Motor neuron (in vitro differentiated cells): ENCODE measurements at regions of chr1 and their contacts with region 1.

Region 1: GRCh38 chr1:110645821-110646735 is 28.7 kb downstream of the KCNA3 start:
- ATAC-seq: peak in 5 of 8 experiments; percentile 35 to 79 (median 55)
- H3K4me3 ChIP-seq: no peak overlapping the region
- H3K27ac ChIP-seq: no peak overlapping the region
- H3K4me1 ChIP-seq: peaks cover 10% of the 10 kb centered on the region in 2 donors

Region 2: DNA sequence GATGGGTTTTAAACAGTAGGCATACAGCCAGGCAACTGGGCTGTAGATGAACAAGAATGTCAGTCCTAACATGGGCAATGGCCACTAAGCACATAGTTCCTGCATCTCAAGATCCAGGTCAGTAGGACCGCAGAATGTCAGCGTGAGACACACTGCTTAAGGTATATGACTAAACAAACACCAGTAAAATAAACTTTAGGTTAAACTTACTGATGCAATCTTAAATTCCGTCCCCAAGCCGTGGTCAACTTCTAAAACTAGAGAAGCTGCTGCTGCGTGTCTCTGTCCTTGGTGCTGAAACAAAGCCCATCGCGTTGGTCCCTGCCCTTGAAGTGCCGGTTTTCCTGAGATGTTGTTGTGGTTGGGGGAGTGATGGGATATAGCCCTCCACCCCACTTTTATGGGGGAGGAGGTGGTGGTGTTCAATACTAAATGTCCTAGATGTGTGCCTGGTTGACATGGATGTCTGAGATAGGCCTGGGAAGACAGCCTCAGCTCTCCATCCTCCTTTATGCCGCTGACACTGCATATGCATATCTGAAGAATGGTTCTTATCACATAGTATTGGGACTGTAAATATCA is 100.6 kb after region 1 on chr1:
- in situ Hi-C with region 1: loop called in 2 of 9 experiments (anchors 10 to 25 kb)
- ATAC-seq: peak in 3 of 8 experiments; percentile 16 to 58 (median 39)
- H3K4me3 ChIP-seq: no peak overlapping the region
- H3K27ac ChIP-seq: no peak overlapping the region
- H3K4me1 ChIP-seq: peaks cover 4 to 5% of the 10 kb centered on the region in 2 donors